ENCODE measurements at regions of chr9 and their contacts with region 1.

Region 1: DNA sequence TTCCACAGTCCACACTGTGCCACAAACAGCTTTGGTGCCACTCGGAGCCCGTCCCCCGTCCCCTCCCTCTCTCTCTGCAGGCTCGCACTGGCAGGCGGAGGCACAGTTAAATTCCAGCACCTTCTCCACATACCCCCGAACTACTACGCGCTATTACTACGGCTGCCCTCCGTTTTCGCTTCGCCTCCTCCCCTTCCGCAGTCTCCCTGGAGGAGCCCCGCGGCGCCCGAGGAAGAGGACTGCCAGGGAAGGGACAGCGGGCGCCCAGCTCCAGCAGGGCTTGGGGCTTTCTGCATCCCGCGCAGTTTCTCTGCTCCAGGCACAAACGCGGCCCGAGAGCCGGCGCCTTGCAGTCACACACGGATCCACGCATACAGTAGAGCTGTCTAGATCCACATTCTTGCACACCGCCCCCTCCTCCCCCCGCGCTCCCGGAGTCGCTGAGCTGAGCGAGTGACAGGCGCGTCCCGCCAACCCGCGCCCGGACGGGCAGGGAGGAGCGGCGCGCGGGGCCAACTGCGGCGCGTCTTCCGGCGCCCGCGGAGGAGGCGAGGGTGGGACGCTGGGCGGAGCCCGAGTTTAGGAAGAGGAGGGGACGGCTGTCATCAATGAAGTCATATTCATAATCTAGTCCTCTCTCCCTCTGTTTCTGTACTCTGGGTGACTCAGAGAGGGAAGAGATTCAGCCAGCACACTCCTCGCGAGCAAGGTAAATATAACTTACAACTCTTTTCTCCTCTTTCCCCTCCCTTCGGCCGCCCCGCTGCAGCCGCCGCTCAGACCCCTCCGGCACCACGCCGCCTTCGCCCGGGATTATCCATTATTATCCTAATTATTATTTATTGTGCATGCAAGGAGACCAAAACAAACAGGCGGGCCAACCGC is at the start of gene SMARCA2:
- DNase-seq: peak; percentile 96
- H3K4me3 ChIP-seq: peak within 1 kb of the TSS; percentile 76 to 98 (median 96)
- H3K4me3 Mint-ChIP-seq: peak within 1 kb of the TSS; percentile 97 to 98
- H3K27ac ChIP-seq: peak within 1 kb of the TSS; percentile 90 to 97
- H3K27ac Mint-ChIP-seq: peak within 1 kb of the TSS; percentile 94 to 98 (median 97)
- H3K4me1 ChIP-seq: peaks cover 23 to 31% of the 10 kb centered on the region in 2 donors
- H3K4me1 Mint-ChIP-seq: peaks cover 29% of the 10 kb centered on the region
- H3K27me3 ChIP-seq: no peaks in the 10 kb centered on the region
- H3K27me3 Mint-ChIP-seq: peaks cover 1 to 3% (median 3%) of the 10 kb centered on the region in 3 donors
- CTCF ChIP-seq: no peak
- polyA plus RNA-seq, gene SMARCA2: 11.0 to 54.7 (median 11.8) TPM

Region 2: DNA sequence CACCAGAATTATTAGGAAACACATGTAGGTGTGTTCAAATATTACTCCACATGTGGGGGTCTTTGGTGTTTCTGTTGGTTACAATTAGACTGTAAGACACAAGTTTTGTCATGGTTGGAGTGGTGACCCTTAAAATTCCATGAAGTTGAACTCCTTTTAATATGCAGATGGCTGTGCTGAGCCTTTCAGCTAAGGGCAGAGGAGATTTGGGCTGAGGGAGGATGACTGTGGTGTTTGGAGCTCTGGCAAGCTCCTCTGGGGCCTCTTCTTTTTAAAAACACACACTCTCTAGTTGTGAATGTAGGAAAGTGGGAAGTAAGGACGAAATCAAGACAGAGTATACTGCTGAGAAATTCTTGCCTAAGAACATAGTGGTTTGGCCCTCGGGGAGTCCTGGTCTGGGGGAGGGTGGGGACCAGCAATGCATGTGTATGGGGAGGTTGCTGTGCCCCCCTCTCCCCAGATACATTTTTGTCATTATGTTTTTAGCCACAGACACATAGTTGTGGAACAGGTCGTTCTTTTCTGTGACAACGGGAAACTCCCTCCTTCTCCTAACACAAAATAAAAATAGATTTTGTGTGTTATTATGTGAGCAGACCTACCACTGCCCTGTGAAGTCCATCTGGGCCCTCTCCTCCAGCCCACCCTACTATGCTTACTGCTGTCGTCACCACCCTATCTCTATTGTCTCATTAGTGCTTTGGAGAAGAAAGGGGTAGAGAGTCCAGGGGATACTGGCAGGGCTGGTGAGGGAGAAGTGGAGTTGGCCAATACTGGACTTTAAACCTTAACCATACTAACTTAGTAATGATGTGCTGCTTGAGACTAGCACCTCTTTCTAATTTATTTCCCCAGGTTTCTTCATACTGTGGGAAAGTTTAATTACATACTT is 10.2 kb after region 1 on chr9:
- intact Hi-C with region 1: no loop called
- DNase-seq: peak in 2 of 3 donors; percentile 40 to 47
- H3K4me3 ChIP-seq: peak overlapping the region in 1 of 3 experiments; percentile 13
- H3K4me3 Mint-ChIP-seq: peak overlapping the region; percentile 53 to 71
- H3K27ac ChIP-seq: peak overlapping the region; percentile 41 to 62
- H3K27ac Mint-ChIP-seq: peak overlapping the region; percentile 70 to 93 (median 88)
- H3K4me1 ChIP-seq: peaks cover 47 to 53% of the 10 kb centered on the region in 2 donors
- H3K4me1 Mint-ChIP-seq: peaks cover 74% of the 10 kb centered on the region
- H3K27me3 ChIP-seq: no peaks in the 10 kb centered on the region
- H3K27me3 Mint-ChIP-seq: peaks cover 0 to 2% (median 0%) of the 10 kb centered on the region in 3 donors
- CTCF ChIP-seq: no peak

Region 3: DNA sequence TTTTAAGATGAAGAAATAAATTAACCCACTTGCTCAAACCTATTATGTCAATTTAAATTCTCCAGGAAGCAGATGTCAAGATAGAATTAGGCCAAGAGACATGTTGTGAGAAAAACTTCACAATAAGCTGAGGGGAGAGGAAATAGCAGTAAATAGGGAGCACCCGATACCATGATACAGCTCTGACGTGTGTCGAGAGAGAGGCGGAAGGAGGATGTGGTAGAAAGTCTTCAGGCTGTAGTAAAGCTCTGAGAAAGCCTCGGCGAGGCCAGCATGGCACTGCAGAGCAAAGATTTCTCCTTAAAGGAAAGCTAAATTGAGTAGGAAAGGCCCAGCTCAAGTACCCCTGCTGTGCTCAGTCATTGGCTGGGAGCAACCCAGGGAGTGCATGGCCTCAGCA is 835.0 kb after region 1 on chr9:
- intact Hi-C with region 1: loop called in 1 of 2 experiments (anchors 10 kb)
- DNase-seq: no peak
- H3K4me3 ChIP-seq: no peak overlapping the region
- H3K4me3 Mint-ChIP-seq: no peak overlapping the region
- H3K27ac ChIP-seq: no peak overlapping the region
- H3K27ac Mint-ChIP-seq: no peak overlapping the region
- H3K4me1 ChIP-seq: peaks cover 2 to 4% of the 10 kb centered on the region in 2 donors
- H3K4me1 Mint-ChIP-seq: peaks cover 4% of the 10 kb centered on the region
- H3K27me3 ChIP-seq: peaks cover 0 to 2% of the 10 kb centered on the region in 2 donors
- H3K27me3 Mint-ChIP-seq: peaks cover 2 to 9% (median 3%) of the 10 kb centered on the region in 3 donors
- CTCF ChIP-seq: no peak